CD8-positive, alpha-beta memory T cell (primary cell): ENCODE measurements at regions of chr11 and their contacts with region 1.

Region 1: DNA sequence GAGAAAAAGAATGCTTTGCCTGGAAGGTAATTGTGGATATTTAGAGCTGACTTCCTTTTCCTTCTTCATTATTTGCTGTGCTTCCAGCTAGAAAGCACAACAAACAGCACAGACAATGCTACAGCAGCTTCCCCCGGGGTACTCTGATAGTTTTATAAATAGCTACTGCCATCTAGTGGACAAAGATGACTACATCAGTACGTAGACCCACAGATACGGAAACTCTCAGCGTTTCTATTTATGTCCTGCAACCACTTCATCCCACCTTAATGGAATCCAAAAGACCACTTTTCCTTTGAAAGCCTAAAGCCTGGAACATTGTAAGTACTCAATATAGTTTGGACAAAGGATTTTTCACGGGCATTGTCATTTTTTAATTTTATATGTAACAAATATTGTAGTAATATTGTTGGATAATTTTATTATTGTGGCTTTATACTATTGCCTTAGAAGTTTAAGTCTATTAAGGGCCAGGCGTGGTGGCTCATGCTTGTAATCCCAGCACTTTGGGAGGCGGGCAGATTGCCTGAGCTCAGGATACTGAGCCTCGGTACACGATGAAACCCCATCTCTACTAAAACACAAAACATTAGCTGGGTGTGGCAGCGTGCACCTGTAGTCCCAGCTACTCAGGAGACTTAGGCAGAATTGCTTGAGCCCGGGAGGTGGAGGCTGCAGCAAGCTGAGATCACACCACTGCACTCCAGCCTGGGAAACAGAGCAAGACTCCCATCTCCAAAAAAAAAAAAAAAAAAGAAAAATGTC is 7.5 kb downstream of the HSPA8 start:
- DNase-seq: peak in 2 of 5 donors; percentile 65 to 69
- H3K4me3 ChIP-seq: no peak overlapping the region
- H3K4me3 Mint-ChIP-seq: peak overlapping the region in 5 of 7 donors; percentile 36 to 73 (median 65)
- H3K27ac ChIP-seq: no peak overlapping the region
- H3K27ac Mint-ChIP-seq: peak overlapping the region; percentile 14 to 99 (median 93)
- H3K4me1 ChIP-seq: peaks cover 52% of the 10 kb centered on the region
- H3K4me1 Mint-ChIP-seq: peaks cover 57 to 66% (median 62%) of the 10 kb centered on the region in 3 donors
- H3K27me3 ChIP-seq: no peaks in the 10 kb centered on the region
- H3K27me3 Mint-ChIP-seq: no peaks in the 10 kb centered on the region

Region 2: DNA sequence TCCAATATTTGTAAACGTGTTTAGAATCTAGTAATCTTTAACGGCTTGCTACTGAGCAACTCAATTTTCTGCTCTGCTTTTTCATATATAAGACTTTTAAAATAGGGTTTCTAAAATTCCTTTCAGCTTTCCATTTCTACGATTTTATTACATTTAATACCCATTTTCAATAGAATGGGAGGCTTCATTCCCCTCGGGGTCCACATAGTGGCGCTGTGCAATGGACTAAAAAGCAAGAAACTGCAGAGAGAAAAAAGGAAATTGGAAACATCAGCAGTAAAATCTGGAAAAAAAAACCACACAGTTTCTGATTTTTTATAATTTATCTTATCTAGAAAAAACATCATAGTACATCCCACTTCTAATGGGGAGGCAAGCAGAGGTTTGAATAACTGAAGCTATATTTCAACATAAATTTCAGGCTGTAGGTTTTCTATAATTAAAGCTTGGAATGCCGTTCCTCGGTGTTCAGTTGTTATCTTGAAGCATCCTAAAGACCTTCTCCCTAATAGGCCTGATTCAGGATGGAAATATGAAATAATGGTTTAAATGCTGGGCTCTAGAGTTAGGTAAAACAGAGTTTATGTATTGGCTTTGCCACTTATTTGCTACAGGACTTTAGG is 190.7 kb before region 1 on chr11:
- CTCF ChIA-PET with region 1: interaction called, 16 read pairs
- POLR2A ChIA-PET with region 1: interaction called, 3 read pairs
- DNase-seq: peak in 1 of 5 donors; percentile 53
- H3K4me3 ChIP-seq: no peak overlapping the region
- H3K4me3 Mint-ChIP-seq: no peak overlapping the region
- H3K27ac ChIP-seq: no peak overlapping the region
- H3K27ac Mint-ChIP-seq: peak overlapping the region in 1 of 8 donors; percentile 70
- H3K4me1 ChIP-seq: no peaks in the 10 kb centered on the region
- H3K4me1 Mint-ChIP-seq: peaks cover 0 to 10% (median 4%) of the 10 kb centered on the region in 3 donors
- H3K27me3 ChIP-seq: no peaks in the 10 kb centered on the region
- H3K27me3 Mint-ChIP-seq: no peaks in the 10 kb centered on the region

Region 3: GRCh38 chr11:123033895-123034294 is 20.6 kb before region 1 on chr11:
- CTCF ChIA-PET with region 1: interaction called, 15 read pairs
- POLR2A ChIA-PET with region 1: no interaction called
- DNase-seq: no peak
- H3K4me3 ChIP-seq: no peak overlapping the region
- H3K4me3 Mint-ChIP-seq: no peak overlapping the region
- H3K27ac ChIP-seq: no peak overlapping the region
- H3K27ac Mint-ChIP-seq: peak overlapping the region in 1 of 8 donors; percentile 35
- H3K4me1 ChIP-seq: no peaks in the 10 kb centered on the region
- H3K4me1 Mint-ChIP-seq: peaks cover 0 to 6% (median 0%) of the 10 kb centered on the region in 3 donors
- H3K27me3 ChIP-seq: no peaks in the 10 kb centered on the region
- H3K27me3 Mint-ChIP-seq: peaks cover 0 to 4% of the 10 kb centered on the region in 2 donors

Region 4: DNA sequence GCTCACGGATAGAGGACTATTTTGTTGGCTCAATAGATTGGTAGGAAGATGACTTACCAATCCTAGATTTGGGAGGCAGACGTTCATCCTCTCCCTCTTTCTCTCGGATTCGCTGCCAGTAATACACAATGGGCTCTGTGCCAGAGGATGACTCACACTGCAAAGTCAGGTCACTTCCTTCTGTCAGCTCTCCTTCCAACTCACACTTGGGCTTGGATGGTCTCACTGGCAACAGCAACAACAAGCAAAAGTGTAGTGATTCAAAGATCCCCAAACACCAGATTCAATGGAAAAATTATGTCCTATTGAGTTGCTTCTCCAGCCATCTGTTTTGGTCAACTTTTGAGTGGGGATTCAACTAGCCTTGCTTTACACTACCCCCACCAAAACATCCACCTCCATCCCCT is 29.1 kb after region 1 on chr11:
- CTCF ChIA-PET with region 1: interaction called, 184 read pairs
- POLR2A ChIA-PET with region 1: interaction called, 10 read pairs
- DNase-seq: peak in 4 of 5 donors; percentile 45 to 84 (median 52)
- H3K4me3 ChIP-seq: peak overlapping the region; percentile 20
- H3K4me3 Mint-ChIP-seq: peak overlapping the region; percentile 23 to 76 (median 57)
- H3K27ac ChIP-seq: no peak overlapping the region
- H3K27ac Mint-ChIP-seq: peak overlapping the region; percentile 68 to 91 (median 78)
- H3K4me1 ChIP-seq: peaks cover 48% of the 10 kb centered on the region
- H3K4me1 Mint-ChIP-seq: peaks cover 37 to 60% (median 43%) of the 10 kb centered on the region in 3 donors
- H3K27me3 ChIP-seq: no peaks in the 10 kb centered on the region
- H3K27me3 Mint-ChIP-seq: no peaks in the 10 kb centered on the region

Region 5: GRCh38 chr11:123246749-123247495 is 192.4 kb after region 1 on chr11:
- CTCF ChIA-PET with region 1: interaction called, 11 read pairs
- POLR2A ChIA-PET with region 1: interaction called, 4 read pairs
- DNase-seq: peak; percentile 64 to 83 (median 69)
- H3K4me3 ChIP-seq: no peak overlapping the region
- H3K4me3 Mint-ChIP-seq: peak overlapping the region in 4 of 7 donors; percentile 23 to 49 (median 42)
- H3K27ac ChIP-seq: no peak overlapping the region
- H3K27ac Mint-ChIP-seq: peak overlapping the region in 3 of 8 donors; percentile 18 to 35 (median 35)
- H3K4me1 ChIP-seq: peaks cover 5% of the 10 kb centered on the region
- H3K4me1 Mint-ChIP-seq: peaks cover 5 to 7% (median 7%) of the 10 kb centered on the region in 3 donors
- H3K27me3 ChIP-seq: no peaks in the 10 kb centered on the region
- H3K27me3 Mint-ChIP-seq: peaks cover 6 to 26% of the 10 kb centered on the region in 2 donors